ENCODE measurements at regions of chr6 and their contacts with region 1.

Region 1: GRCh38 chr6:16409531-16410441 is 171.4 kb downstream of the GMPR start:
- DNase-seq: peak; percentile 75
- ATAC-seq: peak; percentile 75

Region 2: DNA sequence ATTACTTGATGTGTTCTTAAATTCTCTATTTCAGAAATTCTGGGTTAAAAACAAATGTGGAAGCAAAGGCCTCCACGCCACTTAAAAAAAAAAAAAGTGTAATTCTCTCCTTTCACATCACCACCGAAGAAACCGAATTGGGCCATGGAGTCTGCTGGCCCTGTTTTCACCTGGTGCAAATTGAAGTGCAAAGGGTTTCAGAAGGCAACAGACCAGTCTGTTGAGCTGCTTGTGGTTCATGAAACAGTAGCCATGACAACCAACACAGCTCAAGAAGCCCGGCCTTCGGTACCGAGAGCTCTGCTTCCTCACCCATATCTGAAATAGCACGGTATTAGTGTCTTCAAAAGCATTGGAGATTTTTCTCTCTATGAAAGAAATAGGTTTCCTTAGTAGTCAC is 108.3 kb before region 1 on chr6:
- intact Hi-C with region 1: no loop called
- DNase-seq: no peak
- ATAC-seq: no peak

Region 3: GRCh38 chr6:16332175-16332542 is 77.6 kb before region 1 on chr6:
- intact Hi-C with region 1: loop called (anchors 1 kb)
- DNase-seq: peak; percentile 89
- ATAC-seq: peak; percentile 80

Region 4: GRCh38 chr6:16432075-16433032 is 22.6 kb after region 1 on chr6:
- intact Hi-C with region 1: no loop called
- DNase-seq: no peak
- ATAC-seq: no peak